A549 (cell line): ENCODE measurements at regions of chr2 and their contacts with region 1.

Region 1: DNA sequence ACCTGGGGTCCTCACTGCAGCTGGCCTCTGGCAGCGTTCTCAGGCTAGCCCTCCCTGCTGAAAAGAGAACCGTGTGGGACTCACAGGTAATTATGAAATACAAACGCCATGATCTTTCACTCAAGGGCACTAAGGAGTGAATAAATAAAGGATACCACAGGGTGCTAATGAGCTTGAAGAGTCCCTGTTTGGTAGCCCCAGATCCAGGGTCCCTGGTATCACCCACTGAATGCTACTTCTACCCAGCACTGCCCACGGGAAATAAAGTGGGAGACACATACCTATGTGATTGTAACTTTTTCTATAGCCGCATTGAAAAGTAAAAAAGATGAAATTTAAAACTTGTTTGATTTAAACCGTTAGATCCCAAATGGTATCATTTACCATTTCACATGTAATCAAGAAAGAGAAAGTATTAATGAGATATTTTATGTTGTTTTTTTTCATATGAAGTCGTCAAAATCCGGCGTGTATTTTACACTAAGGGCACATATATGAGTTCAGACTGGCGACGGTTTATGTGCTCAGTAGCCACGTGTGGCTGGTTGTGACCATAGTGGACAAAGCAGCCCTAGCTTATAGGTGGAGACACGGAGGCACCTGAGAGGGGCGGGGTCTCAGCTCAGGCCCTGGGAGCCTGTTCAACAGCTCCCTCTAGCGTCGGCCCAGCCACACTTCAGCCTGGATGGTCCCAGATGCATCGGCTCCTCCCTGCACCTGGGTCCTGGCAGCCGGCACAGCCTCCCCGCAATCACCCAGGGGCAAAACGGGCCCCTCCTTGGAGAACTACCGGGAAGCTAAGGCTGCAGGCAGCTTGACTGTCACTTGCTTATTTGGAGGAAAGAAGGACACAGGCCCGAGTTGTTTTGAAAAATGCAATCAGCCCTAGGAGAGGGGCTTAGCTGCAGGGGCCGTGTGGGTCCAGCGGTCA is 39.2 kb downstream of the ODC1 start:
- DNase-seq: peak; percentile 93 to 94
- ATAC-seq: peak; percentile 58 to 80
- H3K4me3 ChIP-seq: peak overlapping the region; percentile 13; the same call in 2 of the 3 replicates
- H3K27ac ChIP-seq: peak overlapping the region; percentile 93 to 95
- H3K4me1 ChIP-seq: peaks cover 63% of the 10 kb centered on the region
- CTCF ChIP-seq: peak; percentile 99
- EP300 ChIP-seq: no peak; a peak in 1 of 5 replicates
- POLR2A ChIP-seq: no peak
- RAD21 ChIP-seq: peak; percentile 99

Region 2: GRCh38 chr2:9984217-9984739 is 424.6 kb before region 1 on chr2:
- CTCF ChIA-PET with region 1: no interaction called
- POLR2A ChIA-PET with region 1: no interaction called
- DNase-seq: peak; percentile 46 to 90
- ATAC-seq: peak; percentile 63 to 89
- H3K4me3 ChIP-seq: no peak overlapping the region
- H3K27ac ChIP-seq: no peak overlapping the region
- H3K4me1 ChIP-seq: 0 out of 3 replicates have a peak, but pooled peaks cover 3% of the 10 kb centered on the region
- CTCF ChIP-seq: peak; percentile 77
- EP300 ChIP-seq: no peak
- POLR2A ChIP-seq: no peak
- RAD21 ChIP-seq: peak; percentile 61 to 66

Region 3: GRCh38 chr2:10141736-10142642 is 266.9 kb before region 1 on chr2:
- CTCF ChIA-PET with region 1: interaction called, 180 read pairs
- POLR2A ChIA-PET with region 1: no interaction called
- DNase-seq: peak in 1 of 2 experiments; percentile 58
- ATAC-seq: peak; percentile 76 to 86
- H3K4me3 ChIP-seq: no peak overlapping the region
- H3K27ac ChIP-seq: no peak overlapping the region
- H3K4me1 ChIP-seq: peaks cover 7% of the 10 kb centered on the region
- CTCF ChIP-seq: peak; percentile 68
- EP300 ChIP-seq: no peak
- POLR2A ChIP-seq: no peak
- RAD21 ChIP-seq: peak; percentile 79 to 80

Region 4: GRCh38 chr2:10188216-10188615 is 220.7 kb before region 1 on chr2:
- CTCF ChIA-PET with region 1: interaction called, 17 read pairs
- POLR2A ChIA-PET with region 1: no interaction called
- DNase-seq: peak; percentile 41 to 77
- ATAC-seq: peak; percentile 19 to 87; a peak in 3 of 6 replicates
- H3K4me3 ChIP-seq: no peak overlapping the region
- H3K27ac ChIP-seq: no peak overlapping the region
- H3K4me1 ChIP-seq: no peaks in the 10 kb centered on the region
- CTCF ChIP-seq: peak; percentile 49
- EP300 ChIP-seq: no peak
- POLR2A ChIP-seq: no peak
- RAD21 ChIP-seq: peak; percentile 28 to 61; a peak in 4 of 5 replicates

Region 5: GRCh38 chr2:10285556-10286198 is 123.2 kb before region 1 on chr2:
- CTCF ChIA-PET with region 1: interaction called, 51 read pairs
- POLR2A ChIA-PET with region 1: interaction called, 4 read pairs
- DNase-seq: peak; percentile 86 to 90
- ATAC-seq: peak; percentile 54 to 76
- H3K4me3 ChIP-seq: no peak overlapping the region
- H3K27ac ChIP-seq: peak overlapping the region; percentile 87
- H3K4me1 ChIP-seq: peaks cover 67% of the 10 kb centered on the region
- CTCF ChIP-seq: no peak
- EP300 ChIP-seq: no peak
- POLR2A ChIP-seq: peak; percentile 35; the same call in 1 of the 2 replicates
- RAD21 ChIP-seq: peak in 1 of 2 experiments; percentile 33; a peak in 2 of 5 replicates

Region 6: DNA sequence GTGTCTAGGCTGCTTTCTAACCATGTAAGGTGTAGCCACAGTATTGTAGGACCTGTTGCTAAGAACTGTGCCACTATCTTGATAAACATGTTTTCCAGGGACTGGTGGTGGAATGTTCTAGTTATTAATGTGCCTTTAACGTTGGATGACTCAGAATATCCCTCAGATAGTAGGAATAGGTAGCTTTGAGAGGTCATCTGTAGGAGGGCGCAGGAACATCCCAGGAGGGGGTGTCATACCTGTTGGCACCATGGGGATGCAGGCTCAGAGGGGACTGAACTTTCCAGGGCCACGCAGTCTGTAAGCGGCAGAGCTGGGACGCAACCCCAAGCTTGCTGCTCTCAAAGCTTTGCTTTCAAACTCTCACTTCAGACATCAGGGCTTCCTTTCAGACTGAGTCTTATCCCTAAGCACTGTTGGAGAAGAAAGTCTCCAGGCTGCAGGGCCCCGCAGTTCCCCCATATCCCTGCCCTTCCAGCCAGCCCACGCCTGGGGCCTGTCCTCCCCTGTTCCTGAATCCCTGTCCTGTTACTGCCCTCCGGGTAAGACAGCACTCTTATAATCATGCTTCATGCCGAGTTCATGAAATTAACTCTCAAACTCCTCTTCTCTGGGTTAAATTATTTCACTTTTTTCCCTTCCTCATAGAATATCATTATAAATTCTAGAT is 68.5 kb before region 1 on chr2:
- CTCF ChIA-PET with region 1: interaction called, 22 read pairs
- POLR2A ChIA-PET with region 1: no interaction called
- DNase-seq: no peak
- ATAC-seq: peak in 1 of 2 experiments; percentile 18; a peak in 3 of 6 replicates
- H3K4me3 ChIP-seq: no peak overlapping the region
- H3K27ac ChIP-seq: peak overlapping the region; percentile 65 to 70; a peak in 4 of 6 replicates
- H3K4me1 ChIP-seq: peaks cover 90% of the 10 kb centered on the region
- CTCF ChIP-seq: no peak
- EP300 ChIP-seq: no peak
- POLR2A ChIP-seq: no peak
- RAD21 ChIP-seq: no peak

Region 7: DNA sequence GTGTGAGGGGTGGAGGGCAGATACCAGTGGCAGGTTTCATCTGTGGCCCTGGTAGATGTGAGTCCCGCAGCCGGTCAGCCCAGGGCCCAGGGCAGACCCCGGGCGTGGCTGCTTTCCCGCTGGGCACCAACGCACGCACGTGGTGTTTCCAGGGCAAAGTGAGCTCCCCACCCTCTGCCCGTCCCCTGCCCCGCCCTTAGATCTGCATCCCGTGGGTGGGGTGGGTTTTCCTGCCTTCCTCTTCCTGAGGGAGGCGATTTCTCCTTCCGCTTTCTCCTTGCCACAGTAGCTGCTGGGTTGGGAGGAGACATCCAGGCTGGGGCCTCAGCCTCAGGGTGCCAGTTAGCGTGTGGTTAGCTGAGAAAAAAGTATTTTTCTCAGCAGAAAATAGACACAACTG is 10.4 kb before region 1 on chr2:
- CTCF ChIA-PET with region 1: interaction called, 44 read pairs
- POLR2A ChIA-PET with region 1: no interaction called
- DNase-seq: no peak
- ATAC-seq: no peak
- H3K4me3 ChIP-seq: no peak overlapping the region
- H3K27ac ChIP-seq: peak overlapping the region in 1 of 2 experiments; percentile 45; a peak in 2 of 6 replicates
- H3K4me1 ChIP-seq: peaks cover 43% of the 10 kb centered on the region
- CTCF ChIP-seq: no peak
- EP300 ChIP-seq: no peak
- POLR2A ChIP-seq: no peak
- RAD21 ChIP-seq: no peak

Region 8: DNA sequence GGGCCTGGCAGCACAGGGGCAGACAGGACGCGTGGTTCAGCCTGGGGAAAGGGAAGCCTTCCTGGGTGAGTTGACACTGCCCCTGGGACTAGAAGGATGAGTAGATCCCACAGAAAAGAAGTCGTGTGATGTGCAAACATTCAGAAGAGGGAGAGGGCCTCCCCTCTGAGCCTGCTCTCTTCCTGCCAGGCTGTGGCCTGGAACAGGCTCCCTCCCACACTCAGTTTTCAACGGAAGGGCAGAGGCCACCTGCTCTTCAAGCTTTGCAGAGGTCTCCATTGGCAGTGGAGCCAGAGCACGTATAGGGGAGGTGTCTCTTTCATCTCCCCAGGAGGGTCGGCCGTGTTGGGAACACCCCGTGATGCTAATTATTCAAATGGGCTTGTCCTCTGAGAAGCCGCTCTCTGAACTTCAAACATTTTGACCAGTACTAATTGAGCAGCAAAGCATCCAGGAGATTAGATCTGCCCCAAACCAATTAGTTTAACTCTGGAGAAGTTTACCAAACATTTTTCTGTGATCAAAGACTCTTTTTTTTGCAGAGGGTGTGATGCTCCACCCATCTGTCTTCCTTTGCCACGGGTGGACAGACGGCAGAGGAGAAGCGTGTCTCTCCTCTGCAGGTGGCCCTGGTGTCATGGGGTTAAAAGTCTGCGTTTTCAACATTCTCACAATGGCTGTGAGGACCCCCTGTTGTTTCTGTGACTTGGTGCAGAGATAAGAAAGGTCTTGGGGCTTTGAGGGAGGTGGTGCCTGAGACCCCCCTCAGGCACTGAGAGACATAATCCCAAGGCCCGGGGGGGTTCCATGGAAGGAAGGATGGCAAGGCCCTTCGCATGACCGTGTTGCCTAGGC is 68.8 kb after region 1 on chr2:
- CTCF ChIA-PET with region 1: no interaction called
- POLR2A ChIA-PET with region 1: no interaction called
- DNase-seq: no peak
- ATAC-seq: no peak; a peak in 1 of 6 replicates
- H3K4me3 ChIP-seq: no peak overlapping the region
- H3K27ac ChIP-seq: no peak overlapping the region
- H3K4me1 ChIP-seq: peaks cover 3% of the 10 kb centered on the region; the same call in 1 of the 3 replicates
- CTCF ChIP-seq: no peak
- EP300 ChIP-seq: no peak
- POLR2A ChIP-seq: no peak
- RAD21 ChIP-seq: no peak